Right ventricle myocardium superior (tissue), 1 donor: ENCODE measurements at regions of chr15 and their contacts with region 1.

Region 1: GRCh38 chr15:92097474-92098178 is 244.1 kb downstream of the SLCO3A1 start:
- DNase-seq: no peak
- ATAC-seq: peak; percentile 90

Region 2: DNA sequence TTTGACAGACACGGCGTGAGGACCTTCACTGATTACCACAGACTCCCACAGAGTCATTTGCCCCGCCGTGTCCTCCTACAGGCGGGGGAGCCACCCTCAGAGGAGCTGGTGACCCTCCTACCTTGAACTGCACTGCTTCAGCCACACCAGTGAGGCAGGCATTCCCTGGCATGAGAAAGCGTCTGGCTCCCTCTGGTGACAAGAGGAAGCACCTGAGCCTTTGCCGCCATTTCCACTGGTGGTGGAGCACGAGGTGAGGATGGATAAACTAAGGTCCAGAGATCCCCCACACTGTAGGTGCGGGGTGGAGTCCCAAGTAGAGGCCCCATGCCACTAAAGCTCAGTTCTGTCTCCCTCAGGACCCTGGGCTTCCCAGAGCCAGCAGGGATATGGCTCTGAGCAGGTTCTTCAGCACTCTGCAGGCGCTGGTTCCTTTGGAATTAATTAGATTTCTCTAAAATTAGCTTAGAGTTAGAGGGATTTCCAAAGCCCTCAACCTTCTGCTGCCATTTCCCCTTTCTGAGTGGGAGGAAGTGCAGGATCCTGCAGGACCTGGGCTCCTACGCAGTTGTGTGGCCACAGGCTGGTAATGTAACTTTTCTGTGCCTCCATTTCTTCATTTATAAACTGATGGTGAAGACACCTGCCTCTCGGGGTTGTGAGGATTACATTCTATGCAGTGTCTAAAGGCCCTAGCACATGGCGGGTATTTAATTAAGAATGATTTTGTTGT is 20.1 kb before region 1 on chr15:
- intact Hi-C with region 1: no loop called
- DNase-seq: peak; percentile 83
- ATAC-seq: peak; percentile 78

Region 3: DNA sequence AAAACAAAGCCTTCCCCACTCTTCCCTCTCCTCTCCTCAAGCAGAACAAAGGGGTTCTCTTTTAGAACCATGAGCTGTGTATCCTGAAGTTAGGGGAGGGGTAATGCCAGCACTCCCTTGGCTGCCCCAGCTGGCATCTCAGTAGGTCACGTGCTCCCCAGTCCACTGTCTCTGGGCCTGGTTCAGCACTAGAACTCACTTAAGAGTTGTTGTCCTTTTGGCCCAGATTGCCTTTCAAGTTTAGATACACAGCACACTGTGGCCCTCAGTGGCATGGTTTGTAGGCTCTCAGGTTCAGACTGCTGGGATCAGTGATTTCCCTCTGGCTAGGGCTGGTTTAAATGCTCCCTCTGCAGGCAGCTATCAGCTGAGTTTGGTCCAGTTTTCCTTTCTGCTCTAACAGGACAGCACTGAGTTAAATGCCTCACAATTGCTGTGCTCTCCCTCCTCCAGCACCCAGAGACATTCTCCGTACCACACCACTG is 107.7 kb after region 1 on chr15:
- intact Hi-C with region 1: loop called (anchors 5 kb)
- DNase-seq: no peak
- ATAC-seq: peak; percentile 86

Region 4: GRCh38 chr15:92226014-92226612 is 128.5 kb after region 1 on chr15:
- intact Hi-C with region 1: loop called (anchors 5 kb)
- DNase-seq: no peak
- ATAC-seq: peak; percentile 87

Region 5: GRCh38 chr15:92383519-92384326 is 286.1 kb after region 1 on chr15:
- intact Hi-C with region 1: loop called (anchors 10 kb)
- DNase-seq: no peak
- ATAC-seq: peak; percentile 67